Heart right ventricle (tissue), 16 donors: ENCODE measurements at regions of chr21 and their contacts with region 1.

Region 1: DNA sequence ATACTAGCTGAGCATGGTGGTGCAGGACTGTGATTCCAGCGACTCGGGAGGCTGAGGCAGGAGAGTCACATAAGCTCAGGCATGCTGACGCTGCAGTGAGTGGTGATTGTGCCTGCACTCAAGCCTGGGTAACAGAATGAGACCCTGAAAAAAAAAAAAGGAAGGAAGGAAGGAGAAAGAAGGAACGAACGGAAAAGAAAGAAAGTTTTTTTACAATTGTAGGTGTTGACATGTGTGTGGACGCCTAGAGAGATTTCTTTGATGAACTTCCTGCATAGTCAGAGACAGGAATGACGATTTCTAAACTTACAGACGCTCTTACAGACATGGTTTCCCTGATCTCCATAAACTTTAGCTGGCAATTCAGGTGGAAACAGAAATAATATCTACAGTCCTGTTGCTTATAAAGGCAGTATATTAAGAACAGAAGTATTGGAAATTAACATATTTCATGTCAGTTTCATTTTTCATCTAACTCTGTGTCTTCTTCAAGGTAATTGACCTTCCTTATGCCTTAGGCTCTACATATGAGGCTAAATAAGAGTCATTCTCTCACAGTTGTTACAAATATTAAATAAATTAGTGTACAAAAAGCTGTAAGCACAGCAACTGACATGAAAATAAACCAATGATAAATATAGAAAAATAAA is 4.1 kb downstream of the SAMSN1 start:
- DNase-seq: no peak
- ATAC-seq: peak in 3 of 8 donors; percentile 29 to 55 (median 55)
- H3K4me3 ChIP-seq: peak overlapping the region in 2 of 10 donors; percentile 3 to 60
- H3K27ac ChIP-seq: peak overlapping the region in 3 of 10 donors; percentile 5 to 92 (median 44)
- H3K4me1 ChIP-seq: peaks cover 0 to 23% (median 0%) of the 10 kb centered on the region in 9 donors
- H3K27me3 ChIP-seq: no peaks in the 10 kb centered on the region
- CTCF ChIP-seq: no peak

Region 2: DNA sequence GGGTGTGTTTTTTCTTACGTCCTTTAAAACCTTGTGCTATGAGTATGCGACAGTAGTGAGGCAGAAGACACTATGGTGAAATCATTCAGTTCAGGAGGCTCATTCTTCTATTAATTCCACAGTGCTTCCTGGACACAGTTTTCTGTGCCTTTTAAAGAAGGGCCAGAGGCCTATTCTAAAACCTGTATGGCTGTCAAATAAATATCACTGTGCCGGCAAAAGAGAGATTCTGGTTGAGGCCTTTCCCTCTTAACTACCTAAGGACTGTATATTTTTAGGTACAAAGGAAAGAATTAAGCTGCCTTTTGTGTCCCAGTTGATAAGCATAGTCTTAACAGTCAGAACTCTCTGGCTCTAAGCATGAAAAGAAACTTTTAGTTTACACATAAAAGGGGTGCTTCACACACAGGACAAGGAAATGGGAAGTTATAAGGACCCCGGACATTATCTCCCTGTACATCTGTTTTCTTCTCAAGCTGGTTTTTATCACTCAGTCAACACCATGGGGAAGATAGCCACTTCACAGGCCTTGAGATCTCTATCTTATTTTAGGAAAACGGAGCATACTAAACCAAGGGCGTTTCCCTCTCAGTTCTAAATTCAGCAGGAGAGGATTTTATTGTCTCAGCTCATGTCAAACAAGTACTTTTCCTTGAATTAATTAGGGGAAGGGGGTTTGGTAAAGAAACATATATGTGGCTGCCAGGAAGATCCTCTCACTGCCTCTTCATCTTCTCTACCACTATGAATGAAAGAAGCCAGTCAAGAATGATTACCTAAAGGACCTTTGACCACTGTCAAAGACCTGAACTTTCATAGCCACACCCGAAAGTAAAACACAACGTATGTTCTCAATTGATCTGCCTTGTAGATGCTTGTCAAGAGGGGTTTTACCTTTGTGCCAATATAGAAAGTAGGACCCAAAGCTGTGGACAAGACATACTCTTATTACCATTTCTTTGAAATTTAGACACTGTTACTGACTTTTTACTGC is 87.7 kb before region 1 on chr21:
- intact Hi-C with region 1: loop called in 2 of 10 experiments (anchors 5 to 10 kb)
- DNase-seq: no peak
- ATAC-seq: no peak
- H3K4me3 ChIP-seq: no peak overlapping the region
- H3K27ac ChIP-seq: no peak overlapping the region
- H3K4me1 ChIP-seq: no peaks in the 10 kb centered on the region
- H3K27me3 ChIP-seq: no peaks in the 10 kb centered on the region
- CTCF ChIP-seq: no peak

Region 3: DNA sequence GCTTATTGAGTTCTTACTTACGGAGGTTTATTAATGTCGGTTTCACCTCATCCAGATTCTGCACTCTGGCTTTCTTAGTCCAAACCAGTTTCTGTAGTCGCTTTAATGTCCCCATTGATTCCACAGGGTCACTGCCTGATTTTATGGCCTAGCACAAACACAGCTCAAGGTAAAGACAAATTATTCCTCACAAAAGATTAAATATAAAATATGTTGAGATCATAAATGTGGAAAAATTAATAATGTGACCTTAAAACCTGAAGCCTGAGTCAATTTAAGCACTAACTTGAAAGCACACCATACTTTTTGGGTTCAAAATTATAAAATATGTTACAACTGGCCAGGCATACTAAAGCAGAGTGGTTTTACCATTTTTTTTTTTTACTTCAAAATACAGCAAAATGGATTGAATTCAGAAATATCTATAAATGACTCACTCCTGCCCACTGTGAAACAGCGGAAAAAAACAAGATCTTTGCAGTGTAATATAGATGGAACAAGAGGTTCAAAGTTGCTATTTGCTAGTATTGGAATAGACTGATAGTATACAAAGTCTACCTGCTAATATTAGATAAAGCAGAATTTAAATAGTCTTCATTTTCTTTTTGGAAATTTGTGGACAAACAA is 41.8 kb after region 1 on chr21:
- intact Hi-C with region 1: loop called in 1 of 10 experiments (anchors 2 kb)
- DNase-seq: no peak
- ATAC-seq: no peak
- H3K4me3 ChIP-seq: no peak overlapping the region
- H3K27ac ChIP-seq: peak overlapping the region in 1 of 10 donors; percentile 32
- H3K4me1 ChIP-seq: peaks cover 0 to 16% (median 0%) of the 10 kb centered on the region in 9 donors
- H3K27me3 ChIP-seq: no peaks in the 10 kb centered on the region
- CTCF ChIP-seq: no peak